CD4-positive, alpha-beta memory T cell (primary cell): ENCODE measurements at regions of chr14 and their contacts with region 1.

Region 1: GRCh38 chr14:21868442-21869046 is 194.9 kb upstream of the OR4E1 start:
- DNase-seq: peak; percentile 64 to 82 (median 68)
- H3K4me3 ChIP-seq: no peak overlapping the region
- H3K4me3 Mint-ChIP-seq: peak overlapping the region; percentile 59 to 83 (median 74)
- H3K27ac ChIP-seq: no peak overlapping the region
- H3K27ac Mint-ChIP-seq: peak overlapping the region in 6 of 7 donors; percentile 53 to 83 (median 66)
- H3K4me1 ChIP-seq: peaks cover 31% of the 10 kb centered on the region
- H3K4me1 Mint-ChIP-seq: peaks cover 9 to 45% (median 24%) of the 10 kb centered on the region in 4 donors
- H3K27me3 ChIP-seq: no peaks in the 10 kb centered on the region
- H3K27me3 Mint-ChIP-seq: peaks cover 0 to 1% of the 10 kb centered on the region in 2 donors

Region 2: DNA sequence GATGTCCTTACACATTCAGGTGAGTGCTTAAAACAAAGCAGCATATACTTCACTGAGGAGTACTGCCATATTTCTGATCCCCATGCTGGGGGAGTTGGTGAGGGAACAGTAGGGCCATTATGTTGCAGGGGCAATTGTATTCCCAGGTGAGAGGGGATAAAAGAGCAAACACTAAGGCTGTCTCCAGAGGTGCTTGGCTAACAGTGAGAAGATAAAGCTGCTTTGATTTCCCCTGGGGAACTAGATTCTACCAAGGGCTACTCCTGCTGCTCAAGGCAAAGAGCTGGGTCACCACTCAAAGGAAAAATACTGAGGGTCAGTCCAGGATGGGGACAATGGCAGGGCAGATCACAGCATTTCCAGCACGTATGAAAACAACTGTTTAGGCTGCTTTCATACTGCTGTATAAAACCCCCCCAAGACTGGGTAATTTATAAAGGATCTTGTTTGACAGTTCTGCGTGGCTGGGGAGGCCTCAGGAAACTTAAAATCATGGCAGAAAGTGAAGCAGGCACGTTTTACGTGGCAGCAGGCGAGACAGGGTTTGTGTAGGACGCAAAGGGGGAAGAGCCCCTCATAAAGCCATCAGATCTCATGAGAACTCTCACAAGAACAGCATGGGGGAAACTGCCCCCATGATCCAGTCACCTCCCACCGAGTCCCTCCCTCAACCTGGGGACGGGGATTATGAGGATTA is 664.9 kb before region 1 on chr14:
- CTCF ChIA-PET with region 1: no interaction called
- POLR2A ChIA-PET with region 1: no interaction called
- intact Hi-C with region 1: no loop called
- DNase-seq: no peak
- H3K4me3 ChIP-seq: no peak overlapping the region
- H3K4me3 Mint-ChIP-seq: no peak overlapping the region
- H3K27ac ChIP-seq: no peak overlapping the region
- H3K27ac Mint-ChIP-seq: peak overlapping the region in 6 of 7 donors; percentile 38 to 75 (median 54)
- H3K4me1 ChIP-seq: no peaks in the 10 kb centered on the region
- H3K4me1 Mint-ChIP-seq: peaks cover 15 to 27% (median 18%) of the 10 kb centered on the region in 4 donors
- H3K27me3 ChIP-seq: no peaks in the 10 kb centered on the region
- H3K27me3 Mint-ChIP-seq: no peaks in the 10 kb centered on the region

Region 3: GRCh38 chr14:21833836-21834235 is 34.7 kb before region 1 on chr14:
- CTCF ChIA-PET with region 1: no interaction called
- POLR2A ChIA-PET with region 1: no interaction called
- intact Hi-C with region 1: no loop called
- DNase-seq: no peak
- H3K4me3 ChIP-seq: no peak overlapping the region
- H3K4me3 Mint-ChIP-seq: no peak overlapping the region
- H3K27ac ChIP-seq: no peak overlapping the region
- H3K27ac Mint-ChIP-seq: no peak overlapping the region
- H3K4me1 ChIP-seq: no peaks in the 10 kb centered on the region
- H3K4me1 Mint-ChIP-seq: no peaks in the 10 kb centered on the region
- H3K27me3 ChIP-seq: no peaks in the 10 kb centered on the region
- H3K27me3 Mint-ChIP-seq: peaks cover 14 to 26% of the 10 kb centered on the region in 2 donors

Region 4: GRCh38 chr14:21852061-21852664 is 16.4 kb before region 1 on chr14:
- CTCF ChIA-PET with region 1: interaction called, 41 read pairs
- POLR2A ChIA-PET with region 1: interaction called, 62 read pairs
- intact Hi-C with region 1: loop called (anchors 2 kb)
- DNase-seq: peak; percentile 62 to 69 (median 66)
- H3K4me3 ChIP-seq: peak overlapping the region in 1 of 2 donors; percentile 27
- H3K4me3 Mint-ChIP-seq: peak overlapping the region; percentile 77 to 87 (median 82)
- H3K27ac ChIP-seq: no peak overlapping the region
- H3K27ac Mint-ChIP-seq: peak overlapping the region; percentile 58 to 93 (median 81)
- H3K4me1 ChIP-seq: no peaks in the 10 kb centered on the region
- H3K4me1 Mint-ChIP-seq: peaks cover 5 to 14% (median 9%) of the 10 kb centered on the region in 4 donors
- H3K27me3 ChIP-seq: no peaks in the 10 kb centered on the region
- H3K27me3 Mint-ChIP-seq: peaks cover 5 to 12% of the 10 kb centered on the region in 2 donors

Region 5: DNA sequence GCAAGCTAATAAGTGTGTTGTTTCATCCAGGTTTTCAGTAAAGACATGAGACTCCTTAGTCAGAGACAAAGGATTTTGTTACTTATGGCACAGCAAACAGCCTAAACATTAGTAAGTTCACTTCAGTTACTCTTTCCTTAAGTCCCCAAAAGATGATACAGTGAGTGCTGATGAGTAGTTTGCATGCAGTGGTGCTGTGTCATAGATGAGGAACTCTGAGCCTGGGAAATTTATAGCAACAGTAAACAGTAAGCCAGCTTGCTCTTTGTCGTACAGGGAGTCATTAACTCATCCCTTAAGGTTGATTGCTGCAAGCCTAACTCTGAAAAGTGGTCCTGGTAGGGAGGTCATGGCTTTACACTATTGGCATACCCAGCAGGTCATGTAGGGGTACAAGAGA is 13.7 kb after region 1 on chr14:
- CTCF ChIA-PET with region 1: interaction called, 10 read pairs
- POLR2A ChIA-PET with region 1: interaction called, 10 read pairs
- intact Hi-C with region 1: loop called (anchors 1 kb)
- DNase-seq: no peak
- H3K4me3 ChIP-seq: no peak overlapping the region
- H3K4me3 Mint-ChIP-seq: peak overlapping the region in 1 of 8 donors; percentile 43
- H3K27ac ChIP-seq: no peak overlapping the region
- H3K27ac Mint-ChIP-seq: no peak overlapping the region
- H3K4me1 ChIP-seq: peaks cover 2% of the 10 kb centered on the region
- H3K4me1 Mint-ChIP-seq: peaks cover 4 to 22% (median 8%) of the 10 kb centered on the region in 4 donors
- H3K27me3 ChIP-seq: no peaks in the 10 kb centered on the region
- H3K27me3 Mint-ChIP-seq: no peaks in the 10 kb centered on the region

Region 6: DNA sequence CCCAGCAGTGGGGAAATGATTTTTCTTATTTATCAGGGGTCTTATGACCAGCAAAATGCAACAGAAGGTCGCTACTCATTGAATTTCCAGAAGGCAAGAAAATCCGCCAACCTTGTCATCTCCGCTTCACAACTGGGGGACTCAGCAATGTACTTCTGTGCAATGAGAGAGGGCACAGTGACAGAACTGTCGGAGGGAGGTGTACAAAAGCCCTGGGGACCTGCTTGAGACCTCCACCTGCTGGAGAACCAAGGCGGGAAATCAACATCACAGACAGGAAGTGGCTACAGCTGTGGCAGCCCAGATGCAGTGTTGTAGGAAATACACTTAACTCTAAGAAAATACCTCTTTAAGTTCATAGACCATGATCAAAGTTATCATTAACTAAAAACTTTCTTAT is 55.9 kb after region 1 on chr14:
- CTCF ChIA-PET with region 1: interaction called, 7 read pairs
- POLR2A ChIA-PET with region 1: no interaction called
- intact Hi-C with region 1: loop called (anchors 2 kb)
- DNase-seq: peak; percentile 61 to 82 (median 69)
- H3K4me3 ChIP-seq: peak overlapping the region in 1 of 2 donors; percentile 28
- H3K4me3 Mint-ChIP-seq: peak overlapping the region; percentile 65 to 87 (median 78)
- H3K27ac ChIP-seq: peak overlapping the region; percentile 46
- H3K27ac Mint-ChIP-seq: peak overlapping the region; percentile 69 to 96 (median 87)
- H3K4me1 ChIP-seq: peaks cover 60% of the 10 kb centered on the region
- H3K4me1 Mint-ChIP-seq: peaks cover 30 to 54% (median 43%) of the 10 kb centered on the region in 4 donors
- H3K27me3 ChIP-seq: no peaks in the 10 kb centered on the region
- H3K27me3 Mint-ChIP-seq: no peaks in the 10 kb centered on the region

Region 7: GRCh38 chr14:21933681-21934080 is 65.1 kb after region 1 on chr14:
- CTCF ChIA-PET with region 1: no interaction called
- POLR2A ChIA-PET with region 1: no interaction called
- intact Hi-C with region 1: loop called (anchors 2 kb)
- DNase-seq: peak in 2 of 5 donors; percentile 27 to 35
- H3K4me3 ChIP-seq: no peak overlapping the region
- H3K4me3 Mint-ChIP-seq: no peak overlapping the region
- H3K27ac ChIP-seq: no peak overlapping the region
- H3K27ac Mint-ChIP-seq: no peak overlapping the region
- H3K4me1 ChIP-seq: peaks cover 2% of the 10 kb centered on the region
- H3K4me1 Mint-ChIP-seq: peaks cover 0 to 8% (median 4%) of the 10 kb centered on the region in 4 donors
- H3K27me3 ChIP-seq: no peaks in the 10 kb centered on the region
- H3K27me3 Mint-ChIP-seq: peaks cover 0 to 2% of the 10 kb centered on the region in 2 donors

Region 8: DNA sequence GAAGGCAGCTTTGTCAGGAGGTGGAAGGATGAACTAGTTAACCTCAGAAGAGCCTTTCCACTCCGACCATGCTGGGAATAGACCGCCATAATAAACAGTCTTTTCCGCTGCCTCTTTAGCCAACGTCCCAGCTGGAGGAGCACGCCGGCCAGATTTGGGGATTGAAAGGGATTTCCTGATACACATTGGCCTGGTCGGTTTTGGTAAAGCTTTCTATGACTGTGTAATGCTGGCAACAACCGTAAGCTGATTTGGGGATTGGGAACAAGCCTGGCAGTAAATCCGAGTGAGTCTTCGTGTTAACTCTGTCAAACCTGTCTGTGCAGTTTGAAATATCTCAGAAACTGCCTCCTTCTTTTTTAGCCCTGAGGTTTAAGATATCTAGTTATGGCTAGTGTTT is 633.5 kb after region 1 on chr14:
- CTCF ChIA-PET with region 1: no interaction called
- POLR2A ChIA-PET with region 1: no interaction called
- intact Hi-C with region 1: loop called (anchors 5 kb)
- DNase-seq: no peak
- H3K4me3 ChIP-seq: peak overlapping the region; percentile 43 to 62
- H3K4me3 Mint-ChIP-seq: peak overlapping the region; percentile 86 to 96 (median 90)
- H3K27ac ChIP-seq: peak overlapping the region; percentile 67
- H3K27ac Mint-ChIP-seq: peak overlapping the region; percentile 87 to 100 (median 94)
- H3K4me1 ChIP-seq: peaks cover 67% of the 10 kb centered on the region
- H3K4me1 Mint-ChIP-seq: peaks cover 25 to 93% (median 30%) of the 10 kb centered on the region in 4 donors
- H3K27me3 ChIP-seq: no peaks in the 10 kb centered on the region
- H3K27me3 Mint-ChIP-seq: no peaks in the 10 kb centered on the region